Naive thymus-derived CD4-positive, alpha-beta T cell (primary cell): ENCODE measurements at regions of chr22 and their contacts with region 1.

Region 1: DNA sequence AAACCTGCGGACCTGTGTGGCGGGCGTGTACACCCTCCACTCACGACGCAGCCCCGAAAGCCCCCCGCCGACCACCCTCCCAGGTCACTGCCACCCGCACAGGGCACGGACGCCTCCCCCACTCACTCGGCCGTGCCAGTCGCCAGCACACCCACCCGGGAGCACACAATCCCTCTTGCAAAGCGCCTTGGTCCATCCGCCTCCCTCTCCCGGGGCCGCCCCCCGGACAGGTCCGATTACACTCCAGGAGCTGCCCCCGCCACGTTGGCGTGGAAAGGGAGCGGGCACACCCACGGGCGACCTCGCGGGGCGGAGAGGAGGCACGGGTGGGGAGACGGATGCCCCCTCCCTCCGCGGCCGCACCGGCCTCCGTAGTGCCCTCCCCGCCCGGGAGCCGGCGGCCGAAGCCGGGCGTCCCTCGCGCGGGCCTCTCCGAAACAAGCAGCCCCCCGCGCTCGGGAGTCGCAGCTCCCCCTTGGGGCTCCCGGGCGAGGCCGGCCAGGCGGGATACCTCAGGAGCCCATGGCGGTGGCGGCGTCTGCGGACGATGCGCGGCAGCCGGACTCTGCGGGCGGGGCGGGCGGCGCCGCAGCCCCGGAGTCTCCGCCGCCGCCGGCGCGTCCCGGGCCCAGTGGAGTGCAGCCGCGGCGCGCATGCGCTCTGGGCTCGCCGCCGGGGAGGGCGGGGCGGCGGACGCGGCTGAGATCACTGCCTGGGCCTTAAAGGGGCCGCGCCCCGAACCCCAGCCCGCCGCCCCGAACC is at the start of gene TMEM184B:
- DNase-seq: peak; percentile 71 to 93 (median 87)
- ATAC-seq: peak; percentile 98
- H3K4me3 ChIP-seq: peak within 1 kb of the TSS; percentile 77
- H3K4me3 Mint-ChIP-seq: peak within 1 kb of the TSS; percentile 90 to 96 (median 94)
- H3K27ac ChIP-seq: peak within 1 kb of the TSS; percentile 89
- H3K27ac Mint-ChIP-seq: peak within 1 kb of the TSS; percentile 92 to 99 (median 96)
- H3K4me1 ChIP-seq: peaks cover 19 to 29% of the 10 kb centered on the region in 2 donors
- H3K4me1 Mint-ChIP-seq: peaks cover 33 to 62% (median 54%) of the 10 kb centered on the region in 7 donors
- H3K27me3 ChIP-seq: no peaks in the 10 kb centered on the region
- H3K27me3 Mint-ChIP-seq: peaks cover 0 to 8% (median 0%) of the 10 kb centered on the region in 5 donors
- total RNA-seq, gene TMEM184B: 26.9 to 41.3 (median 35.0) TPM

Region 2: DNA sequence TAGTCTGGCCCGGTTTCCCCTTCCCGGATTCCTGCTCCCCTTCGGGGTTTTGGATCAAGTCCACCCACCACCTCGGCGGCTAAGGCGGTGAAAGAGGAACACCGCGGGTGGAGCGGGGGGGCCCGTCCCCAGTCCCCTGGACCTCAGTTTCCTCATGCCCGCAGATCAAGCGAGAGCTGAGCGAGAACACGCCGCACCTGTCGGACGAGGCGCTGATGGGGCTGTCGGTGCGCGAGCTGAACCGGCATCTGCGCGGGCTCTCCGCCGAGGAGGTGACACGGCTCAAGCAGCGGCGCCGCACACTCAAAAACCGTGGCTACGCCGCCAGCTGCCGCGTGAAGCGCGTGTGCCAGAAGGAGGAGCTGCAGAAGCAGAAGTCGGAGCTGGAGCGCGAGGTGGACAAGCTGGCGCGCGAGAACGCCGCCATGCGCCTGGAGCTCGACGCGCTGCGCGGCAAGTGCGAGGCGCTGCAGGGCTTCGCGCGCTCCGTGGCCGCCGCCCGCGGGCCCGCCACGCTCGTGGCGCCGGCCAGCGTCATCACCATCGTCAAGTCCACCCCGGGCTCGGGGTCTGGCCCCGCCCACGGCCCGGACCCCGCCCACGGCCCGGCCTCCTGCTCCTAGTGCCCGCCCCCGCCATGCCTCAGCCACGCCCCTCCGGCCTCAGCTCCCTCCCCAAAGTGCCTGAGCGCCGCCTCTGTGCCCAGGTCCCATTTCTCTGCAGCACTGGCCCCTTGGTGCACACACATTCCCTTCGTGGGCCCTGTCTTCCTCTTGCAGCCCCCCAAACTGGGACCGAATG is 58.1 kb before region 1 on chr22:
- CTCF ChIA-PET with region 1: no interaction called
- POLR2A ChIA-PET with region 1: no interaction called
- intact Hi-C with region 1: loop called in 1 of 2 experiments (anchors 2 kb)
- DNase-seq: peak; percentile 54 to 78 (median 69)
- ATAC-seq: peak; percentile 82
- H3K4me3 ChIP-seq: peak overlapping the region; percentile 30
- H3K4me3 Mint-ChIP-seq: peak overlapping the region in 9 of 10 donors; percentile 9 to 76 (median 69)
- H3K27ac ChIP-seq: peak overlapping the region; percentile 39
- H3K27ac Mint-ChIP-seq: peak overlapping the region in 3 of 9 donors; percentile 44 to 77 (median 57)
- H3K4me1 ChIP-seq: peaks cover 6 to 12% of the 10 kb centered on the region in 2 donors
- H3K4me1 Mint-ChIP-seq: peaks cover 11 to 30% (median 15%) of the 10 kb centered on the region in 7 donors
- H3K27me3 ChIP-seq: no peaks in the 10 kb centered on the region
- H3K27me3 Mint-ChIP-seq: no peaks in the 10 kb centered on the region

Region 3: GRCh38 chr22:38317122-38317994 is 44.8 kb after region 1 on chr22 and contains the start of gene CSNK1E:
- CTCF ChIA-PET with region 1: no interaction called
- POLR2A ChIA-PET with region 1: interaction called, 4 read pairs
- intact Hi-C with region 1: loop called (anchors 1 kb)
- DNase-seq: peak; percentile 67 to 85 (median 74)
- ATAC-seq: peak; percentile 79
- H3K4me3 ChIP-seq: peak within 1 kb of the TSS; percentile 62
- H3K4me3 Mint-ChIP-seq: peak within 1 kb of the TSS; percentile 84 to 92 (median 89)
- H3K27ac ChIP-seq: peak within 1 kb of the TSS; percentile 91
- H3K27ac Mint-ChIP-seq: peak within 1 kb of the TSS; percentile 94 to 97 (median 95)
- H3K4me1 ChIP-seq: peaks cover 28 to 39% of the 10 kb centered on the region in 2 donors
- H3K4me1 Mint-ChIP-seq: peaks cover 31 to 49% (median 42%) of the 10 kb centered on the region in 7 donors
- H3K27me3 ChIP-seq: no peaks in the 10 kb centered on the region
- H3K27me3 Mint-ChIP-seq: no peaks in the 10 kb centered on the region
- total RNA-seq, gene CSNK1E: 71.6 to 143 (median 91.9) TPM

Region 4: GRCh38 chr22:38398609-38399461 is 126.3 kb after region 1 on chr22:
- CTCF ChIA-PET with region 1: no interaction called
- POLR2A ChIA-PET with region 1: no interaction called
- intact Hi-C with region 1: loop called in 1 of 2 experiments (anchors 5 kb)
- DNase-seq: peak; percentile 74 to 91 (median 82)
- ATAC-seq: peak; percentile 93
- H3K4me3 ChIP-seq: peak overlapping the region; percentile 46
- H3K4me3 Mint-ChIP-seq: peak overlapping the region; percentile 78 to 93 (median 85)
- H3K27ac ChIP-seq: peak overlapping the region; percentile 69
- H3K27ac Mint-ChIP-seq: peak overlapping the region in 8 of 9 donors; percentile 55 to 84 (median 76)
- H3K4me1 ChIP-seq: no peaks in the 10 kb centered on the region
- H3K4me1 Mint-ChIP-seq: peaks cover 6 to 41% (median 33%) of the 10 kb centered on the region in 7 donors
- H3K27me3 ChIP-seq: no peaks in the 10 kb centered on the region
- H3K27me3 Mint-ChIP-seq: peaks cover 0 to 30% (median 0%) of the 10 kb centered on the region in 5 donors